Dendritic cell treated with granulocyte-macrophage colony-stimulating factor and Interleukin-4, amounts not matched to agents 40 ng/mL and 50 ng/mL, for 4 days (primary cell): ENCODE measurements at regions of chr12 and their contacts with region 1.

Region 1: GRCh38 chr12:11040162-11040561 is 9.0 kb upstream of the TAS2R31 start:
- H3K4me3 Mint-ChIP-seq: no peak overlapping the region
- H3K27ac Mint-ChIP-seq: no peak overlapping the region
- H3K4me1 Mint-ChIP-seq: no peaks in the 10 kb centered on the region
- H3K27me3 Mint-ChIP-seq: no peaks in the 10 kb centered on the region

Region 2: GRCh38 chr12:11067514-11067913 is 27.4 kb after region 1 on chr12:
- intact Hi-C with region 1: loop called (anchors 1 kb)
- H3K4me3 Mint-ChIP-seq: no peak overlapping the region
- H3K27ac Mint-ChIP-seq: no peak overlapping the region
- H3K4me1 Mint-ChIP-seq: peaks cover 5% of the 10 kb centered on the region
- H3K27me3 Mint-ChIP-seq: no peaks in the 10 kb centered on the region

Region 3: GRCh38 chr12:11092128-11092527 is 52.0 kb after region 1 on chr12 and contains the start of gene TAS2R43:
- intact Hi-C with region 1: loop called (anchors 2 kb)
- H3K4me3 Mint-ChIP-seq: no peak within 1 kb of the TSS
- H3K27ac Mint-ChIP-seq: no peak within 1 kb of the TSS
- H3K4me1 Mint-ChIP-seq: no peaks in the 10 kb centered on the region
- H3K27me3 Mint-ChIP-seq: no peaks in the 10 kb centered on the region

Region 4: DNA sequence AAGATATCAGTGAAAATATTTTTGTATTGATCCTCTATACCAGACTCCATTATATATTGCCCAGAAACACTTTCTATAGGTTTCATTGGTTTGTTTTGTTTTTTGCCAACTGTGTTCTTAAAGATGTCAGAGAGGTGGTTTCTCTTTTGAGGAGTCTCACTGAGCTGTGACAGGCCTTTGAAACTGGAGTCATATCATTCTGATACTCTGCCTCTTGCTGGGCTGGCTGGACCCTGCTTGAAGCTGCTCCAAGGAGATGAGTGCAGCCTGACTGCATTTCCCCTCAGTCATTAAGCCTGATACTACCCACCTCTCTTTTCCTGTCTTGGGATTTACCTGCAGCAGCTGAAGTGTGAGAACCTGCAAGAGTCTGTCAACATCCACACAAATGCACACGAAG is 110.7 kb after region 1 on chr12:
- intact Hi-C with region 1: no loop called
- H3K4me3 Mint-ChIP-seq: no peak overlapping the region
- H3K27ac Mint-ChIP-seq: no peak overlapping the region
- H3K4me1 Mint-ChIP-seq: no peaks in the 10 kb centered on the region
- H3K27me3 Mint-ChIP-seq: no peaks in the 10 kb centered on the region